SK-N-SH (cell line): ENCODE measurements at regions of chr5 and their contacts with region 1.

Region 1: DNA sequence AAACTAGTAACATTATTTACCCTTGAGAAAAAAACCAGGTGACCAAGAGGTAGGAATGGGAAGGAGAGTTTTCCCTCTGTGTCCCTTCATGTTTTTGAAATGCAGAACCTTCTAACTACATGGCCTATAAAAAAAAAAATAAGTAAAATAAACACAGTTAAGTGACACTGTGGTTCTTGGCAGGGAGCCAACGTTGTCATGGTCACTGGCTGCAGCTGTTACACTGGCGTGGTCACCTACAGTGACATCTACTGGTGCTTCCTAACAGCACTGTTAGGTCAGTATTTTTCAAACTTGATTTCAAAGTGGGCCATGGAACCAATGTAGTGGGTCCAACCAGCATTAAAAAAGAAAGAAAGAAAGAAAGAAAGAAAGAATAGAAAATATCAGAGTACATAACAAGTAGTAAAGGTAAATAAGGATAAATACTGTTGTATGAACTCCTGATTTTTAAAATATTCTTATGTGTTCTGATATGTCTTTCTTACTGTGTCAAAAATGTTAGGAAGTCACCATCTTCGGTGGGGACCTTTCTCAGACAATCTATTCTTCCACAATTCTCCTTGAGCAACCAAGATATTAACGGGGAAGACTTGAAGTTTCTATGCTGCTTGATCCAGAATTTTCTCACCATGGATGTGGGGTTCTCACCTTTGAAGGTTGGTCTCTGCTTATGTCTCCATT is 59.1 kb upstream of the PJA2 start:
- DNase-seq: peak; percentile 74
- H3K4me3 ChIP-seq: no peak overlapping the region
- H3K27ac ChIP-seq: no peak overlapping the region
- H3K4me1 ChIP-seq: 0 out of 4 replicates have a peak, but pooled peaks cover 0 to 3% of the 10 kb centered on the region in 2 experiments
- H3K27me3 ChIP-seq: no peaks in the 10 kb centered on the region
- CTCF ChIP-seq: peak; percentile 91
- EP300 ChIP-seq: no peak
- RAD21 ChIP-seq: peak; percentile 82

Region 2: GRCh38 chr5:108642167-108642906 is 826.5 kb before region 1 on chr5:
- CTCF ChIA-PET with region 1: interaction called, 18 read pairs
- POLR2A ChIA-PET with region 1: no interaction called
- DNase-seq: peak; percentile 68
- H3K4me3 ChIP-seq: peak overlapping the region; percentile 27 to 52; a peak in 3 of 4 replicates
- H3K27ac ChIP-seq: no peak overlapping the region
- H3K4me1 ChIP-seq: peaks cover 0 to 14% of the 10 kb centered on the region in 2 experiments; a peak in 3 of 4 replicates
- H3K27me3 ChIP-seq: no peaks in the 10 kb centered on the region
- CTCF ChIP-seq: peak; percentile 90
- EP300 ChIP-seq: no peak
- RAD21 ChIP-seq: peak; percentile 92

Region 3: GRCh38 chr5:109479260-109479860 is 10.5 kb after region 1 on chr5:
- CTCF ChIA-PET with region 1: interaction called, 13 read pairs
- POLR2A ChIA-PET with region 1: no interaction called
- DNase-seq: no peak
- H3K4me3 ChIP-seq: no peak overlapping the region
- H3K27ac ChIP-seq: no peak overlapping the region
- H3K4me1 ChIP-seq: no peaks in the 10 kb centered on the region
- H3K27me3 ChIP-seq: no peaks in the 10 kb centered on the region
- CTCF ChIP-seq: peak; percentile 69
- EP300 ChIP-seq: no peak
- RAD21 ChIP-seq: peak; percentile 62

Region 4: DNA sequence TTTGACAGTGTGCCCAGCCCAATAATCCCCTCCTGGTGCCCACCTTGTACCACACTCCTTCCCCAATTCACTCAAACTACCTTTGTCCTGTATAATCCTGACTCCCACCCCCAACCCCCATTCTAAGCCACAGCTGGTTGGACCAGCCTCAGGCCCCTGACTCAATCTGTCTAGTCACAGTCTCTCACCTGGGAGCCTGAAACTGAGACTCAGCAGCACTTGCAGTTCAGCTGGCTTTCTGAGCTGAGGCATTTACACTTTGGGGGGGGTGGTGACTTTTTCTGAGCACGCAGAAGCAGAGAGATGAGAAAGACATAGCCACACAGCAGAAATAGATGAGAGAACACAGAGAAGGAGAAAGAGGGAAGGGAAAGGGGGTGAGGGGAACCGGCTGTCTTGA is 468.1 kb after region 1 on chr5:
- CTCF ChIA-PET with region 1: no interaction called
- POLR2A ChIA-PET with region 1: no interaction called
- DNase-seq: no peak
- H3K4me3 ChIP-seq: peak overlapping the region in 1 of 2 experiments; percentile 16; a peak in 1 of 4 replicates
- H3K27ac ChIP-seq: no peak overlapping the region
- H3K4me1 ChIP-seq: no peaks in the 10 kb centered on the region; a peak in 1 of 4 replicates
- H3K27me3 ChIP-seq: no peaks in the 10 kb centered on the region
- CTCF ChIP-seq: no peak
- EP300 ChIP-seq: no peak
- RAD21 ChIP-seq: no peak